OCI-LY7 (cell line): ENCODE measurements at regions of chr5 and their contacts with region 1.

Region 1: DNA sequence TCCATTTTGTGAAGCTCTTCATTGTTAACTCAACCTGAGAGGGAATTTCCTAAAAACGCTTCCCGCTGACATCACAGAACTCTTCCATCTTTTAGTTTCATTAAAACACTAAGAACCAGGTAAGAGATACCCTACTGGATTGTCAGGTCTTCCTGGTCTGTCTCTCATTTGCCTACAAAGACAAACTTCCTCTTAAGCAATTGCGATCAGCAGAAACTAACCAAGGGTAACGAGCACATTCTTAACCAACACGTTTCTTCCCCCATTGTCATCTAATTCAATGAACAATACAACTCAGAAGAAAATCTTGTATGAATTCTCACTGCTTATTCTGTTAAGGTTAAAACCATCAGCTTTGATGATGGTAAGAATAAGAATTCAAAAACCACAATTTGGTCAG is 6.6 kb downstream of the FBXW11 start:
- DNase-seq: peak; percentile 60
- H3K4me3 ChIP-seq: peak overlapping the region; percentile 56
- H3K27ac ChIP-seq: peak overlapping the region; percentile 27
- H3K4me1 ChIP-seq: peaks cover 52% of the 10 kb centered on the region
- CTCF ChIP-seq: no peak

Region 2: GRCh38 chr5:171984748-171985419 is 15.0 kb before region 1 on chr5:
- CTCF ChIA-PET with region 1: no interaction called
- POLR2A ChIA-PET with region 1: interaction called, 18 read pairs
- intact Hi-C with region 1: no loop called
- DNase-seq: no peak
- H3K4me3 ChIP-seq: no peak overlapping the region
- H3K27ac ChIP-seq: no peak overlapping the region
- H3K4me1 ChIP-seq: peaks cover 22% of the 10 kb centered on the region
- CTCF ChIP-seq: no peak